ENCODE measurements at regions of chr14 and their contacts with region 1.

Region 1: DNA sequence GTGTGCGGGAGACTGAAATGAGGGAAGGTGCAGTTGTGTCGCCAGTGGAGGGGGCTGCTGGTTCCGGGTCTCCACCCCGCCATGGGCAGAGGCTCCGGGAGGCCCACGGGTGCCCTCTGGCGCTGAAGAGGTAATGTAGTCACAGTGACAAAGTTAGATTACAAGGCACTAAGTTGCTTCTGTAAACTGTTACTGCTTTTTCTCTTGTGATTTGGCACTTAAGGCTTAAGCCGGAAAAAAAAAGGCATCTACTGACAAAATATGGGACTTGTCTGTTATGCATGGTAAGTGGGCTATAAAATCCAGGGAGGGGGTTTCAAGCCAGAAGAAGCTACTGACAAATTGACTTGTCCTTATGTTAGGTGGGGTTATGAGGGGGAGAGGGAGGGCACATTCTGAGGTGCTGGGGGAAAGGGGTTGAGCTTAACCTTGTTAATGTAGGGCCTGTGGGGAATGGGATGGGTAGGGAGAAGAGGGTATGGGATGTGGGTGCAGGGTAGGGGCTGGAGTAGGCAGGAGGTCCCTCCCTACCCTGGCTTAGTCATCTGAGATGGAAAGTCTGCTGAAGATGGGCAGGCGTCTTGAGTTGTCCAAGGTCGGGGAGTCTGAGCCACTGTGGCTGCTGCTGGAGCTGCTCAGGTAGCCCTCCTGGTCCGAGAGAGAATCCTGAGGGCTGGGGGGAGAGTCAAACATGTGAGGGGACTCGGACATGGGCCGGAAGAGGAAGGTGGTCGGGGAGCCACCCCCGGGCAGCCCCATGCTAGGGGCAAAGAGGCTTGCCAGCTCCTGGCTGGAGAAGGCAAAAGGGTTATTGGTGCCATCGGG is 3.7 kb downstream of the ZFP36L1 start:
- DNase-seq: peak; percentile 70 to 91 (median 88)
- ATAC-seq: peak; percentile 64
- H3K4me3 ChIP-seq: peak overlapping the region; percentile 91
- H3K4me3 Mint-ChIP-seq: peak overlapping the region; percentile 92 to 99 (median 95)
- H3K27ac ChIP-seq: peak overlapping the region; percentile 100
- H3K27ac Mint-ChIP-seq: peak overlapping the region; percentile 91 to 100 (median 99)
- H3K4me1 ChIP-seq: peaks cover 37 to 43% of the 10 kb centered on the region in 2 donors
- H3K4me1 Mint-ChIP-seq: peaks cover 43 to 61% (median 50%) of the 10 kb centered on the region in 7 donors
- H3K27me3 ChIP-seq: no peaks in the 10 kb centered on the region
- H3K27me3 Mint-ChIP-seq: peaks cover 0 to 2% (median 0%) of the 10 kb centered on the region in 5 donors

Region 2: DNA sequence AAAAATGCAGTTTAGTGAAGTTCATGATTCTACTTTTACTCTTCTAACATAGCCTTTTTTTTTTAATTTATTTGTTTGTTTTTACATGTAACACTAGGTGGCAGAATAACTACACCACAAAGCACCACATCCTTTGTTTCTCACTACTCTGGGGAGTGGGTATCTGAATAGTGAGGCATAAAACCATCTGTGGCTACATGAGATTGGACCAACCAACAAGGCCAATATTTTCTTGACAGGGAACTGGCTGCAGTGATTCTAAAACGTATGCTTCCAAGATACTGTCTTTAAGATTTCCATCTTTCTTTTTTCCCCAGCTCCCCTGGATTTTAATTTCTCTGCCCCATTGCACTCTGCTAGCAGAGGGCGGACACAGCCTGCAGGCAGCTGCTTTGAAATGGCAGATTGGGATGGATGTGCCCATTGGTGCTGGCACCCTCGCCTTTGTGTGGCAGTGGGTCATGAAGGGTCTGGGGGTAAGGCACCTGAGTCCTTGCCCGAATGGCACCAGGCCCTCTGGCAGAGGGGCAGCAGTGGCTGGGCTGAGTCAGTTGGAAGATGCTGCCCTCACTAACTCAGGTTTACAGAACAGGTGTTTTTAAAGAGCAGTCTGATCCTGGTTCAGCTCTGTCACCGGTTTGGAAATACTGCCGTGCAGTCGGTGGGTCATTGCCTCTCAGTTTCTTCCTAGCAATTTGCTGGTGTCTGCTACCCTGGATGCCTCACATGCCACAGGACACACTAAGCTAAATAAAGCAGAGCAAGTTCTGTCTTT is 540.5 kb before region 1 on chr14:
- CTCF ChIA-PET with region 1: interaction called, 219 read pairs
- POLR2A ChIA-PET with region 1: interaction called, 203 read pairs
- intact Hi-C with region 1: loop called (anchors 1 kb)
- DNase-seq: peak in 7 of 9 donors; percentile 34 to 75 (median 64)
- ATAC-seq: peak; percentile 89
- H3K4me3 ChIP-seq: no peak overlapping the region
- H3K4me3 Mint-ChIP-seq: no peak overlapping the region
- H3K27ac ChIP-seq: no peak overlapping the region
- H3K27ac Mint-ChIP-seq: peak overlapping the region in 7 of 9 donors; percentile 41 to 81 (median 64)
- H3K4me1 ChIP-seq: peaks cover 0 to 13% of the 10 kb centered on the region in 2 donors
- H3K4me1 Mint-ChIP-seq: peaks cover 14 to 52% (median 47%) of the 10 kb centered on the region in 7 donors
- H3K27me3 ChIP-seq: no peaks in the 10 kb centered on the region
- H3K27me3 Mint-ChIP-seq: no peaks in the 10 kb centered on the region

Region 3: GRCh38 chr14:68369281-68370056 is 419.7 kb before region 1 on chr14:
- CTCF ChIA-PET with region 1: interaction called, 16 read pairs
- POLR2A ChIA-PET with region 1: interaction called, 13 read pairs
- intact Hi-C with region 1: loop called (anchors 1 to 5 kb)
- DNase-seq: no peak
- ATAC-seq: no peak
- H3K4me3 ChIP-seq: no peak overlapping the region
- H3K4me3 Mint-ChIP-seq: peak overlapping the region in 7 of 10 donors; percentile 42 to 61 (median 47)
- H3K27ac ChIP-seq: no peak overlapping the region
- H3K27ac Mint-ChIP-seq: peak overlapping the region in 5 of 9 donors; percentile 14 to 71 (median 18)
- H3K4me1 ChIP-seq: peaks cover 0 to 11% of the 10 kb centered on the region in 2 donors
- H3K4me1 Mint-ChIP-seq: peaks cover 11 to 68% (median 55%) of the 10 kb centered on the region in 7 donors
- H3K27me3 ChIP-seq: no peaks in the 10 kb centered on the region
- H3K27me3 Mint-ChIP-seq: no peaks in the 10 kb centered on the region

Region 4: GRCh38 chr14:68506021-68506644 is 283.1 kb before region 1 on chr14:
- CTCF ChIA-PET with region 1: interaction called, 41 read pairs
- POLR2A ChIA-PET with region 1: interaction called, 149 read pairs
- intact Hi-C with region 1: loop called in 1 of 2 experiments (anchors 2 kb)
- DNase-seq: peak in 2 of 9 donors; percentile 13 to 14
- ATAC-seq: no peak
- H3K4me3 ChIP-seq: peak overlapping the region; percentile 19
- H3K4me3 Mint-ChIP-seq: peak overlapping the region; percentile 39 to 84 (median 78)
- H3K27ac ChIP-seq: peak overlapping the region; percentile 52
- H3K27ac Mint-ChIP-seq: peak overlapping the region in 8 of 9 donors; percentile 89 to 98 (median 93)
- H3K4me1 ChIP-seq: peaks cover 29 to 66% of the 10 kb centered on the region in 2 donors
- H3K4me1 Mint-ChIP-seq: peaks cover 28 to 93% (median 86%) of the 10 kb centered on the region in 7 donors
- H3K27me3 ChIP-seq: no peaks in the 10 kb centered on the region
- H3K27me3 Mint-ChIP-seq: no peaks in the 10 kb centered on the region

Region 5: GRCh38 chr14:68685419-68686204 is 103.6 kb before region 1 on chr14:
- CTCF ChIA-PET with region 1: interaction called, 6 read pairs
- POLR2A ChIA-PET with region 1: interaction called, 36 read pairs
- intact Hi-C with region 1: loop called in 1 of 2 experiments (anchors 1 kb)
- DNase-seq: peak; percentile 31 to 74 (median 64)
- ATAC-seq: peak; percentile 91
- H3K4me3 ChIP-seq: no peak overlapping the region
- H3K4me3 Mint-ChIP-seq: peak overlapping the region; percentile 3 to 74 (median 48)
- H3K27ac ChIP-seq: peak overlapping the region; percentile 25
- H3K27ac Mint-ChIP-seq: peak overlapping the region; percentile 74 to 97 (median 91)
- H3K4me1 ChIP-seq: peaks cover 44 to 53% of the 10 kb centered on the region in 2 donors
- H3K4me1 Mint-ChIP-seq: peaks cover 52 to 74% (median 59%) of the 10 kb centered on the region in 7 donors
- H3K27me3 ChIP-seq: no peaks in the 10 kb centered on the region
- H3K27me3 Mint-ChIP-seq: no peaks in the 10 kb centered on the region

Region 6: DNA sequence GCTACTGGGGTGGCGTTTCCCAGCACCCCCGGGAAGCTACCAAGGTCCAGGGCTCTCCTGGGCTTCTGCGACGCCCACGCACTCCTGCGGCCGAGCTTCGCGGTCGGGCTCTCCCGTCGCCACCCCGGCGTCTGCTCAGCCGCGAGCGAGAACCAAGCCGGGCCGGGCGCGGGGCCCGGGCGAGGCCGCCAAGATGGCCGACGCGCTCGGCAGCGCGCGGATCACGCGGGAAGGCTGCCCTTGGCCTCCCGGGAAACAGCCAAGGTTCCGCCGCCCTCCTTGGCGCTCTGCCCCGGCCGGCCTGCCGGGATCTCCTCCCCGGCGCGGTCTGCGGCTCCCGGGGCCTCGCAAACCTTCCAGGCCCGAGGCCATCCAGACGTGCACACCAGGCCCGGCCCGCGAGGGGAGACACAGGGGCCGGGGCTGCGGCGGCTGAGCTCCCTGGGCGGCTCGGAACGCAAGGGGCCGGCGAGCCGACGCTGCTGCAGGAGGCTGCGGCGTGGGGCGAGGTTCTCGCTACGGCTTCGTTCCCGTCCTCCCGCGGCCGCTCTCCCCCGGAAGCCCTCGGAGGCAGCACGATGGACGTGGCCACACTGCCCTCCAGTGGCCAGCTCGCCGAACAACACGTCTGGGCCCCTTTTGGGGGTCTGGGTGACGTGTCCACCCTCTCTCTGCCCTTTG is 27.2 kb after region 1 on chr14:
- CTCF ChIA-PET with region 1: interaction called, 169 read pairs
- POLR2A ChIA-PET with region 1: interaction called, 1,273 read pairs
- intact Hi-C with region 1: loop called (anchors 1 to 5 kb)
- DNase-seq: peak; percentile 77 to 93 (median 87)
- ATAC-seq: peak; percentile 92
- H3K4me3 ChIP-seq: peak overlapping the region; percentile 63
- H3K4me3 Mint-ChIP-seq: peak overlapping the region; percentile 82 to 95 (median 86)
- H3K27ac ChIP-seq: peak overlapping the region; percentile 95
- H3K27ac Mint-ChIP-seq: peak overlapping the region; percentile 93 to 100 (median 96)
- H3K4me1 ChIP-seq: peaks cover 59 to 62% of the 10 kb centered on the region in 2 donors
- H3K4me1 Mint-ChIP-seq: peaks cover 48 to 89% (median 66%) of the 10 kb centered on the region in 7 donors
- H3K27me3 ChIP-seq: no peaks in the 10 kb centered on the region
- H3K27me3 Mint-ChIP-seq: no peaks in the 10 kb centered on the region